ENCODE measurements at regions of chr2 and their contacts with region 1.

Region 1: DNA sequence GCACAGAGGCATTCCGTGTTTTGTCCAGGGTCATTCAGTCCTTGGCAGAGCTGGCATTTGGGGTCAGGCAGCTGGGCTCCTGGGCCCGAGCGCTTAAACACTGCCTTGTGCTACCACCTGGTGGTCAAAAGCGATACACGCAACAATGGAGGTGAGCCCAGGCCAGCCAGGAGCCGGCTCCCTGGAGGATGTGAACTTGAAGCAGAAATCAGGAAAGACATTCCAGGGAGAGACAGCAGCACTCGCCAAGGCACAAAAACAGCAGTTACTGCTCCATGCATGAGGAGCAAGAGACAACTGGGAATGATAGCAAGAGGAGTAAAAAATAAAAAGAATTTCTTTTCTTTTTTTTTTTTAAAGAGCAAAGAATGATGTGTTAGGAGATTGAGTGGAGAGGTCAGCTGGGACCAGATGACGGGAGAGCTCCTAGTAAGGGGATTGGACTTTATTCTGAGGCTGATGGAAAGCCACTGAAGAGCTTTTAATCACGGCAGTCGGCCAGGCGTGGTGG is 20.7 kb downstream of the SCYGR8 start:
- DNase-seq: peak; percentile 62
- H3K4me3 ChIP-seq: no peak overlapping the region
- H3K27ac ChIP-seq: no peak overlapping the region
- H3K4me1 ChIP-seq: no peaks in the 10 kb centered on the region
- H3K27me3 ChIP-seq: no peaks in the 10 kb centered on the region
- CTCF ChIP-seq: peak; percentile 71 to 79 (median 76)
- POLR2A ChIP-seq: no peak

Region 2: GRCh38 chr2:227406177-227407031 is 360.0 kb before region 1 on chr2:
- intact Hi-C with region 1: loop called (anchors 5 kb)
- DNase-seq: peak; percentile 39
- H3K4me3 ChIP-seq: no peak overlapping the region
- H3K27ac ChIP-seq: no peak overlapping the region
- H3K4me1 ChIP-seq: no peaks in the 10 kb centered on the region
- H3K27me3 ChIP-seq: no peaks in the 10 kb centered on the region
- CTCF ChIP-seq: peak; percentile 17 to 64 (median 53)
- POLR2A ChIP-seq: no peak

Region 3: GRCh38 chr2:227471924-227472264 is 294.5 kb before region 1 on chr2 and contains the start of gene AGFG1:
- intact Hi-C with region 1: loop called (anchors 5 kb)
- DNase-seq: peak; percentile 78
- H3K4me3 ChIP-seq: peak within 1 kb of the TSS; percentile 92 to 93
- H3K27ac ChIP-seq: peak within 1 kb of the TSS; percentile 74 to 81
- H3K4me1 ChIP-seq: peaks cover 13% of the 10 kb centered on the region
- H3K27me3 ChIP-seq: no peaks in the 10 kb centered on the region
- CTCF ChIP-seq: peak; percentile 94 to 97 (median 96)
- POLR2A ChIP-seq: peak; percentile 67
- total RNA-seq, gene AGFG1: 40.3 to 73.7 TPM

Region 4: GRCh38 chr2:227655454-227655853 is 111.0 kb before region 1 on chr2:
- intact Hi-C with region 1: loop called (anchors 5 kb)
- DNase-seq: no peak
- H3K4me3 ChIP-seq: no peak overlapping the region
- H3K27ac ChIP-seq: no peak overlapping the region
- H3K4me1 ChIP-seq: no peaks in the 10 kb centered on the region
- H3K27me3 ChIP-seq: no peaks in the 10 kb centered on the region
- CTCF ChIP-seq: no peak
- POLR2A ChIP-seq: no peak

Region 5: DNA sequence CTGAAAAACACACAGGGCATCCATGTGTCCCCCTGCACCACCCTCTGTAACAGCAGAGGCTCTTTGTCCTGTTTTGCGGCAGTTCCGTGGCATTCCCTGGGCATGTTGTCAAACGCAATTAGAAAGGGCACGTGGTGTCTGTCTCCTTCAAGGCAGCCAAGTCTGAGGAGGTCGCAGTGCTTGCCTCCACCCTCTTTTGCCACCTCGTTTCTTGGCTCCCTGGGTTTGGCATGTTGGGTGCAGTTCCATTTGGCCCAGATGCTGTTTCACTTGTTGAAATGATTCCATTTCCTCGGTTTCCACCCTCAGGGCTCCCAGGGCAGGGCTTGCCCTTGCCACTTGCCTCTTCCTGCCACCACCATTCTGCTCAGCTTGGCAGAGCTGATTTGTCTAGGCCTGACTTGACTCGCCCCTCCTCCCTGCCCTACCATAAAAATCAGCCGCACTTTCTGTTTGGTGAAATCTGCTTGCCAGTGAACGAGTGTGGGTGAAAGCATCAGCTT is 59.6 kb after region 1 on chr2:
- intact Hi-C with region 1: no loop called
- DNase-seq: peak; percentile 24
- H3K4me3 ChIP-seq: no peak overlapping the region
- H3K27ac ChIP-seq: no peak overlapping the region
- H3K4me1 ChIP-seq: no peaks in the 10 kb centered on the region
- H3K27me3 ChIP-seq: no peaks in the 10 kb centered on the region
- CTCF ChIP-seq: no peak
- POLR2A ChIP-seq: no peak

Measured in prostate gland (tissue), 2 donors.